ENCODE measurements at regions of chr3 and their contacts with region 1.

Region 1: GRCh38 chr3:48088749-48089466 is 72.7 kb upstream of the MAP4 start:
- DNase-seq: peak; percentile 96
- H3K4me3 Mint-ChIP-seq: peak overlapping the region; percentile 93
- H3K27ac Mint-ChIP-seq: peak overlapping the region; percentile 89
- H3K4me1 Mint-ChIP-seq: peaks cover 32% of the 10 kb centered on the region
- H3K27me3 Mint-ChIP-seq: no peaks in the 10 kb centered on the region

Region 2: DNA sequence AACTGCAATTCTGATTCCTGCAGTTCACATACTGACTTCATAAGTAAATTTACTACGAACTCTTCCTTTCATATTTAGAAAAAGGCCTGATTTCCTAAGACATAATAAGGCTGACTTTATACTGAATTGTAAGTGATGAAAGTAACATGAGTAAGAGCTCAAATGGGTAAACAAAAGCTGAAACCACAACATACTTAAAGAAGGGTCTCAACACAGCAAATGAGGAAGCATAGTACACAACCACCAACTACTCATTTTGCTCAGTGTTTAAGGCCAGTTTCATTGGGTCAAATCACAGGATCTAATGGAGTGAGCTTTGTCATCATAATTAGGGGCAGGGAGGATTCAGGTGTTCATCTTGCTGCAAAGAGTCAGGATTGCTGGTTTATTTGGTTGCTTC is 1006.4 kb before region 1 on chr3:
- CTCF ChIA-PET with region 1: no interaction called
- POLR2A ChIA-PET with region 1: no interaction called
- intact Hi-C with region 1: no loop called
- DNase-seq: no peak
- H3K4me3 Mint-ChIP-seq: no peak overlapping the region
- H3K27ac Mint-ChIP-seq: no peak overlapping the region
- H3K4me1 Mint-ChIP-seq: peaks cover 23% of the 10 kb centered on the region
- H3K27me3 Mint-ChIP-seq: no peaks in the 10 kb centered on the region

Region 3: DNA sequence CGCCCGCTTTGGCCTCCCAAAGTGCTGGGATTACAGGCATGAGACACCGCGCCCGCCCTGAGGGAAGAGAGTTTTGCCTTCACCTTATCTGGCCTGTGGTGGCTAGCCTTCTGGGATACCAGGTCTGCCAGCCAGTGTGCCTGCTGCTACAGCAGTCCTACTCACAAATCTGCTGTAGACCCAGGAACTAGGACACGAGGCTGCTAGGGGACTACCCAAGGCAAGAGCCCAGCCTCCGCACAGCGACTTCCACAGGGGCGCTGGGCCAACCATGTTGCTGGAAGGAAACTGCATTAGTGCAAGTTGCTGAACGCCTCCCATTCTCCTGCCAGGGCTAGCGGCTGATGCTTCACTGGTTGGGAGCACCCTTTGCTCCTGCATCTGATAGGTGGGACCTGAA is 232.2 kb before region 1 on chr3:
- CTCF ChIA-PET with region 1: no interaction called
- POLR2A ChIA-PET with region 1: no interaction called
- intact Hi-C with region 1: no loop called
- DNase-seq: no peak
- H3K4me3 Mint-ChIP-seq: no peak overlapping the region
- H3K27ac Mint-ChIP-seq: no peak overlapping the region
- H3K4me1 Mint-ChIP-seq: no peaks in the 10 kb centered on the region
- H3K27me3 Mint-ChIP-seq: no peaks in the 10 kb centered on the region

Region 4: DNA sequence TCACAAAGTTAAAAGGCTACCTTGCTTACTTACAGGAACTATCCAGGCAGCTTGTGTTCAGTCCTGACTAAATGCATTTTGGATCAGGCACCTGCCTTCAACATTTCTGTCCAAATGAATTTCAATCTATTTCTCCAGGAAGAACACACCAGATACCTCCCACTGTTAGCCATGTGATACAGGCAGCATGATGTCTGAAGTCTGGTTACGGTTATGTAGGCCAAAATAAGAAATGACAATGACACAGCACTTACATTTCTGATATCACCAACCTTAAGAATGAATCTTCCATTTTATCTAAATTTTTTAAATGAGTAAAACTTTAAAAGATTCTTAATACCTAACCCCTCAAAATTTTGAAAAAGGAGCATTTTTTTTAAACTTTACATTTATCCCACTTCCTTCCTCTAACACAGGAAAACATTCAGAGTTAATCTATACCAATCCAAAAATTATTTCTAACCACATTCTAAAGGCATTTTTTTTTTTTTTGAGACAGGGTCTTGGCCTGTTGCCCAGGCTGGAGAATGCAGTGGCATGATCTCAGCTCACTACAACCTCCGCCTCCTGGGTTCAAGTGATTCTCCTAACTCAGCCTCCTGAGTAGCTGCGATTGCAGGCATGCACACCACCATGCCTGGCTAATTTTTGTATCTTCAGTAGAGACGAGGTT is 72.5 kb before region 1 on chr3 and contains the start of gene MAP4:
- CTCF ChIA-PET with region 1: no interaction called
- POLR2A ChIA-PET with region 1: no interaction called
- intact Hi-C with region 1: no loop called
- DNase-seq: no peak
- H3K4me3 Mint-ChIP-seq: no peak within 1 kb of the TSS
- H3K27ac Mint-ChIP-seq: no peak within 1 kb of the TSS
- H3K4me1 Mint-ChIP-seq: peaks cover 40% of the 10 kb centered on the region
- H3K27me3 Mint-ChIP-seq: no peaks in the 10 kb centered on the region
- total RNA-seq, gene MAP4: 114 to 116 TPM

Region 5: GRCh38 chr3:48112813-48113212 is 23.9 kb after region 1 on chr3:
- CTCF ChIA-PET with region 1: interaction called, 3 read pairs
- POLR2A ChIA-PET with region 1: interaction called, 4 read pairs
- intact Hi-C with region 1: loop called (anchors 2 kb)
- DNase-seq: no peak
- H3K4me3 Mint-ChIP-seq: no peak overlapping the region
- H3K27ac Mint-ChIP-seq: peak overlapping the region; percentile 28
- H3K4me1 Mint-ChIP-seq: peaks cover 9% of the 10 kb centered on the region
- H3K27me3 Mint-ChIP-seq: no peaks in the 10 kb centered on the region

Region 6: DNA sequence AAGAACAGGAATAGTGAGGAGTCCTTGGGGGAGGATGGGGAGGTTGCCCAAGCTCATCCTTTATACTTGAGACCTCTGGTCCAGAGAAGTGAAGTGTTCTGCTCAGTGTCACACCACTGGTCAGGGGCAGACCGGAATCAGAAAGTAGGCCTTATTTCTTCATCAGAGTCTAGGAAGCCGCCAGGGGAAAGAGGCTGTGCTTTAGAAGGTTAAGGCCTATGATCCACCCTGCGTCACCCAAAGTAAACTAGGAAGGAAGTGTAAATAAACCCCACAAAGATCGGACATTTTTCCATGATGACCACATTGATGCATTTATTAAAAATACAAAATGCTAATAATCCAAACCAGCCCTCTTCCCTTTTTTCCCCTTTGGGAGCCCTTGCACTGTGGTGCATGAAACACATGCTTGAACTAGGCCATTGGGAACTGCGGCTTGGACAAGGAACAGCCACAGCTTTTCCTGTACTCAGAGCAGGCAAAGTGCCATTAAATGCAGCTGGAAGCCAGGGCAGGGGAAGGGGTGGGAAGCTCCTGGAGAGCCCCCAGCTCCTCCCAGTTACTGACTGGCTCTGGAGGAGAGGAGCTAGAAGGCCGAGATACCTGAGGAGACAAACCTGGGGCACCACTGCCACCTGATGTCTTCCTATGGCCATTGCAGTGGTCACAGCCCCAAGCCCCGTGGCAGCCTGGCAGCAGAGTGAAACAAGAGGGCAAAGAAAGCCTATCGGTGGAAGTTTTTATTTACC is 62.3 kb after region 1 on chr3:
- CTCF ChIA-PET with region 1: interaction called, 11 read pairs
- POLR2A ChIA-PET with region 1: no interaction called
- intact Hi-C with region 1: no loop called
- DNase-seq: peak; percentile 80
- H3K4me3 Mint-ChIP-seq: no peak overlapping the region
- H3K27ac Mint-ChIP-seq: no peak overlapping the region
- H3K4me1 Mint-ChIP-seq: no peaks in the 10 kb centered on the region
- H3K27me3 Mint-ChIP-seq: no peaks in the 10 kb centered on the region

Region 7: DNA sequence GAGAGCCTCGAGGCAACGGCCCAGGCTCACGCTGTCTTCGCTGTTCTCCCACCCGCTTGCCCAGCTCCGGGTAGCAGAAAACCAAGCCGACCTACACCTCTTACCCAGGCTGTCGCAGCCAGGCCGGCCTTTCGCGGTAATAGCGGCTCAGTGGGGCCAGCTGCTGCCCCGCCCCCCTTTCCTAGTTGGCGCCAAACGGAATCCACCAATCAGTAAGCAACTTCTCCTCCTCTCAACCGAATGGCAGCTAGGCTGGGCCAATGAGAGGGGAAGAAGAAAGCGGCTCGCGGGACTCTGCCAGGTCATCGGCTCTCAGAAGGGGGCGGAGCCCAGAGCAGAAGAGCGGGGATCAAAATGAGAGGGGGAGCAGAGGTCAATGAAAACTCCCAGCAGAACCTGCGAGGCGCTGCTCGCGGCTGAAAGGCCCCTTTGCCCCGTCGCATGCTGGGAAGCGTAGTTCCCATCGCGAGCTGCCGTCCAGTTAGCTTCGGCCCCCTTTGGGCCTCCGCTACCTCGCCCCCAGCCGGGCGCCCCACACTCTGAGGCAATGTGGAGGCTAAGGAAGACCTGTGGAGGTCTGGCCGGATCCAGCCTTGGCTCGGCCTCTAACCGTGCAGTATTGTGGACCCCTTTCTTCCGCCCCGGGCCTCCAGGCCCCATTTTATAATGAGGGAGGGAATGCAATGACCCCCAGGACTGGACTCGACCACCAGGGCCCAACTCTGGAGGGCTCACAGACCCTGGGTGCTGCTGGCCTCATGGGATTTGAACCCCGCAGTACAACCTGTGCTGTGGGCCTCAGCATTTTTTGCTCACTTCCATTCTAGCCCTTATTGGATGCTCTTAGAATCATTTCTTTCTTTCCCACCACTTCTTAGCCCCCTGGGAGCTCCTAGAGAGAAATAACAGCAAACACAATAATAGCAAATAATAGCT is 99.6 kb after region 1 on chr3 and contains the start of gene CDC25A:
- CTCF ChIA-PET with region 1: interaction called, 3 read pairs
- POLR2A ChIA-PET with region 1: no interaction called
- intact Hi-C with region 1: loop called (anchors 2 kb)
- DNase-seq: peak; percentile 98
- H3K4me3 Mint-ChIP-seq: peak within 1 kb of the TSS; percentile 94
- H3K27ac Mint-ChIP-seq: peak within 1 kb of the TSS; percentile 66
- H3K4me1 Mint-ChIP-seq: peaks cover 14% of the 10 kb centered on the region
- H3K27me3 Mint-ChIP-seq: peaks cover 7% of the 10 kb centered on the region
- total RNA-seq, gene CDC25A: 33.7 to 36.8 TPM